AG04450 (cell line): ENCODE measurements at regions of chr1 and their contacts with region 1.

Region 1: GRCh38 chr1:15936021-15936420 is 39.9 kb downstream of the ZBTB17 start:
- DNase-seq: no peak
- H3K4me3 ChIP-seq: no peak overlapping the region
- H3K27ac ChIP-seq: no peak overlapping the region
- H3K27me3 ChIP-seq: no peaks in the 10 kb centered on the region
- CTCF ChIP-seq: no peak

Region 2: GRCh38 chr1:15803354-15803753 is 132.7 kb before region 1 on chr1:
- CTCF ChIA-PET with region 1: no interaction called
- POLR2A ChIA-PET with region 1: interaction called, 12 read pairs
- DNase-seq: no peak
- H3K4me3 ChIP-seq: no peak overlapping the region
- H3K27ac ChIP-seq: no peak overlapping the region
- H3K27me3 ChIP-seq: no peaks in the 10 kb centered on the region
- CTCF ChIP-seq: peak; percentile 48